Psoas muscle (tissue), 8 donors: ENCODE measurements at regions of chr12 and their contacts with region 1.

Region 1: DNA sequence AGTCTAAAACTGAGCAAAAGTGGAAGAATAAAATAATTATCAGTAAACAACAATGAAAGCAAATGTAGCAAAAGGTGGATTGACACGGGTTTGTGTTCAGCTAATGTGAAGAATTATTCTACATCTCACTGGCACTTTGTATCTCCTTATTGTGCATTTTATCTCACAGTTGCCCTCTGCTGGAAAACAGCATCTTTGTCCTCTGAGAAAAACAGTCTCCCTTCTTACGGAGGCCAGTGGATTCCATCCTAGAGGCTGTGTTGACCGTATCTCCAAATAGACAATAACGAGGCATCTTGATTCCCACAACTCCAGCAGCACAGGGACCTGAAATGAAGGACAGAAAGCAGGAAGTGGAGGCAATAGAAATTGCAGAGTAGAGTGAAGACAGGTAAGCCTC is 51.3 kb upstream of the PLBD1 start:
- DNase-seq: no peak
- ATAC-seq: peak in 1 of 4 donors; percentile 60
- H3K4me3 ChIP-seq: no peak overlapping the region
- H3K27ac ChIP-seq: no peak overlapping the region
- H3K4me1 ChIP-seq: peaks cover 3% of the 10 kb centered on the region
- H3K27me3 ChIP-seq: no peaks in the 10 kb centered on the region
- CTCF ChIP-seq: peak; percentile 33

Region 2: DNA sequence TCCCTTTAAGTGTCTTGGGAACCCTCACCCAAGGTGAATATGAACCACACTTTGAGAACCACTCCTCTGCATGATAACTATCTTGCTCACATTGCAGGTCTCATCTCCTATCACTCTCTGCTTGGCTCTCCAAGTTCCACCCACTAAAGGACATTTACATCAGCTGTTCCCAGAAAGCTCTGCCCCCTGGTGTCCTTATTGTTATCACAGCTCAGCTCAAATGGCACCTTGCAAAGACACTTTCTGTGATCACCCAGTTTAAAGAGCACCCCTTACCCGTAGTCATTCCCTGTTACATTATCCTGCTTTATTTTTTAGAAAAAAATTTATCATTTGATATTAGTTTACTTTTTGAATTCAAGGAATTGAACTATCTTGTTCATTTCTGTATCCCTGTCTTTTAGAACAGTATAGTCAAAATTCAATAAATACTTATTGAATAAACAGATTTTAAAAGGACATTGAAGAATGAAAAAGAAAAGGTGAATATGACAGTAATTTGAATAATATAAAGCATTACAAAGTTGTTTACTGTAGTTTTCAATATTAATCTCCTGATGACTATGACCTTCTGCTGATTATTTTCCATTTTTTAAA is 98.0 kb after region 1 on chr12:
- intact Hi-C with region 1: loop called in 1 of 2 experiments (anchors 5 kb)
- DNase-seq: no peak
- ATAC-seq: peak in 2 of 4 donors; percentile 49 to 65
- H3K4me3 ChIP-seq: no peak overlapping the region
- H3K27ac ChIP-seq: no peak overlapping the region
- H3K4me1 ChIP-seq: no peaks in the 10 kb centered on the region
- H3K27me3 ChIP-seq: no peaks in the 10 kb centered on the region
- CTCF ChIP-seq: peak; percentile 47